ENCODE measurements at regions of chr4 and their contacts with region 1.

Region 1: GRCh38 chr4:186191200-186192065 is at the start of gene CYP4V2:
- DNase-seq: peak; percentile 82 to 89
- H3K4me3 ChIP-seq: peak within 1 kb of the TSS; percentile 60 to 80
- H3K27ac ChIP-seq: peak within 1 kb of the TSS; percentile 92 to 93
- H3K4me1 ChIP-seq: peaks cover 0 to 25% (median 14%) of the 10 kb centered on the region in 4 donors
- H3K27me3 ChIP-seq: no peaks in the 10 kb centered on the region
- CTCF ChIP-seq: peak; percentile 13 to 25

Region 2: GRCh38 chr4:185708348-185708747 is 483.1 kb before region 1 on chr4:
- intact Hi-C with region 1: no loop called
- DNase-seq: no peak
- H3K4me3 ChIP-seq: no peak overlapping the region
- H3K27ac ChIP-seq: peak overlapping the region; percentile 84 to 89
- H3K4me1 ChIP-seq: peaks cover 0 to 69% (median 41%) of the 10 kb centered on the region in 4 donors
- H3K27me3 ChIP-seq: no peaks in the 10 kb centered on the region
- CTCF ChIP-seq: no peak

Region 3: DNA sequence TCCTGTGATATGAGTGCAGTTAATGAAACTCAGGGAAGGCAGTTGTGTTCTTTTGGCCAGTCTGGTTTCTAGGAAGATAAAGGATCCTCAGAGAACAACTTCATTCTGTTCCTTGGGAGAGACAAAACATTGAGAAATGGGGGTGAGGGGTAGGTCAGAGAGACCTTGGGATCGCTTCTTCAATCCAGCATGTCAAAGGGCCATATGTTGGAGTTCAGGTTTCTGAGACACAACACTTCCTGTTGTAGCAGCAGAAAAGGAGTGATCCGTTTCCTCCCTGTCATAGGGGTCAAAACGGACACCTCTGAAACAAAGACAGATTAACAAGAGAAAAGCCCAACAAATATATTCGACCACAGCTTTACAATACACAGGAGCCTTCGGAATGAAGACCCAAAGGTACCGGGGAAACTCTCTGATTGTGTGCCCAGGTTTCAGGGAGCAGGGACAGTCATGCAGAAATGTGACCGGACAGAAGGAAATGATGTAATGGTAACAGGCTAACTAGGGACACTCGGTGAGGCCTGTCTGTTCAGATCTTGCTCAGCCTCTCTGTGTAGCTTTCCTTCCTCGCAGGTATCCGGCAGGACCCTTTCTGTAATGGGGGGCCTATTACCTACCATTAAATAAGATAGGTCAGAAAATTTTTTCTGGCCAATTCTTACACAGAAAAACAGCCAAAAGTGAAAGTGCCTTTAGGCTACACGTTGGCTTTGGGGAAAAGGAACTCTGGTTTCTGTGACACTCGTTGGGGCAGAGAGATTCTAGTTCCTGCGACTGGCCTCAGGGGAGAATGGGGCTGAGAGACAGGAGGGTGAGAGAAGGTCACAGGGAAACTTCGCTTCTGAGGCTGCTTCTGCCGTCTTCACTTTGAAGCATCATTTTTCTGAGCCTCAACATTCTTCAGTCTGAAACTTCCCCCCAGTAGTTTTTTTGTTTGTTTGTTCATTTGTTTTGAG is 225.7 kb before region 1 on chr4:
- intact Hi-C with region 1: no loop called
- DNase-seq: no peak
- H3K4me3 ChIP-seq: no peak overlapping the region
- H3K27ac ChIP-seq: peak overlapping the region; percentile 53 to 74
- H3K4me1 ChIP-seq: peaks cover 0 to 31% (median 13%) of the 10 kb centered on the region in 4 donors
- H3K27me3 ChIP-seq: no peaks in the 10 kb centered on the region
- CTCF ChIP-seq: no peak

Region 4: GRCh38 chr4:186149872-186150271 is 41.6 kb before region 1 on chr4:
- intact Hi-C with region 1: loop called (anchors 5 kb)
- DNase-seq: peak; percentile 66 to 80
- H3K4me3 ChIP-seq: peak overlapping the region; percentile 10 to 23
- H3K27ac ChIP-seq: peak overlapping the region; percentile 15 to 35
- H3K4me1 ChIP-seq: peaks cover 0 to 20% (median 6%) of the 10 kb centered on the region in 4 donors
- H3K27me3 ChIP-seq: no peaks in the 10 kb centered on the region
- CTCF ChIP-seq: peak; percentile 43 to 57